ENCODE measurements at regions of chr22 and their contacts with region 1.

Region 1: GRCh38 chr22:31970490-31971444 is 26.4 kb downstream of the YWHAH start:
- DNase-seq: peak; percentile 75 to 93 (median 83)
- H3K4me3 ChIP-seq: peak overlapping the region; percentile 41 to 78 (median 60)
- H3K27ac ChIP-seq: peak overlapping the region in 45 of 59 donors; percentile 2 to 85 (median 55)
- H3K27me3 ChIP-seq: no peaks in the 10 kb centered on the region
- CTCF ChIP-seq: peak; percentile 71 to 98 (median 90)

Region 2: DNA sequence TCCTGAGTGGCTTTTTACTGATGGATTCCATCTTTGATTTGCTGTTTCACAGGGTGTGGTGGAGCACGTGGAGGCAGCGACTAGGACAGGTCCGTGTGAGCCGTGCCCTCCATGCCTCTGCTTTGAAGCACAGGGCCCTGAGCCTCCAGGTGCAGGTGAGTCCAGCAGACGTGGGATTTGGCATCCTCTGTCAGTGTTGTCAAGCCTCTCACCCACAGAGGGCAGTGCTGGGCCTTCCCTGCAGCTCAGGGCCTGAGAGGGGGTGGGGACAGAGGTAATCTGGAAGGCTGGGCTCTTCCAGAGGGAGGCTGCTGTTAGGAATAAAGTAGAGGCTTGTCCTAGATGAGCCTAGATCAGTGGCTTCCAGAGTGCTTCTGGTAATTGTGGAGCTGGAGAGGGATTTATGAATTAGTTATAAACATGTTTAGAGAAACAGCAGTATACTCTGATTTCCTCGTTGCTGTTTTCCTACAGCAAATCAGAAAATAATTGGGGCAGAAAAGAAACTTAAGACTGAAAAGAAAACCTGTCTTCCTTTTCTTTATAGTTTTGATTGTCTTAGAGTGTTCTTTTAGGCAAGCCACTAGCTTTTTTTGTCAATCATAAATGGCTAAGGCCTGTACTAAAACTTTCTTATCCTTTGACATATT is 409.4 kb before region 1 on chr22:
- intact Hi-C with region 1: loop called in 1 of 2 experiments (anchors 5 kb)
- DNase-seq: peak; percentile 47 to 92 (median 74)
- H3K4me3 ChIP-seq: no peak overlapping the region
- H3K27ac ChIP-seq: peak overlapping the region in 34 of 59 donors; percentile 0 to 70 (median 39)
- H3K27me3 ChIP-seq: no peaks in the 10 kb centered on the region
- CTCF ChIP-seq: peak; percentile 27 to 87 (median 75)

Region 3: DNA sequence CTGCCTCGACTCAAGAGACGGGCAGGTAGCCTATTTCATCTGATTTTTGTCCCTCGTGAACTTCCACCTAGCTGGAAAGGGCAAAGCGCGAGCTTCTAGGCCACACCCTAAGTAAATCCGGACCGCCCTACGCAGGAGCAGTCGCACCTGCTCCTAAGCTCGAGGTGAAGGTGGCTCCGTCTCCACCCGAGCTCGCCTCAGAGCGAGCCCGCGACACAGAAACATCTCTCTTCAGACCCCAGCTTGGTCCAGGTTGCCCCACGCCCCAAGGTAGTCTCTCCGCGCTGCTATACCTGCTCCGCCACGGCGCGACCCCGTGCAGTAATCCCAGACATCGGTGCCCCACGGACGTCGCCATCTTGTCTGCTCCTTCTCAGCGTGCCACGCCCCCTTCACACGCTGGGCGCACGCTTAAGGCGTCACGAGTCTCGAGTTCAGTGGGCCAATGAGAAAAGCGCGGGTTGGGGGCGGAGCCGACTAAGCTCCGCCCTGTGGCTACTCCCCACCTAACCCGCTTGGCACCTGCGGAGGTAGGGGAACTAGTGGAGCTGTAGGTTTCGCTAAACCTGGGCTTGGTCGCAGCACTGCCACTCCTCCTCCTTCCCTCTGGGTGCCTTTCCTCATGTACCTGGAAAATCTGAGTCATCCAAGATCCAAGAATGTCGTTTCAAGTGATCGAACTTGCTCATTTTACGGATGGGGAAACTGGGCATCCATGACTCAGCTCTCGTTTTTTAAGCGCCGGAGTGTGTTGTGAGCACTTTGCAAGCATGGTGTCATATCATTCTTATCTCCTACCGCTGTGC is 308.7 kb before region 1 on chr22 and contains the start of gene PISD:
- intact Hi-C with region 1: loop called in 1 of 2 experiments (anchors 5 kb)
- DNase-seq: peak; percentile 88 to 95 (median 94)
- H3K4me3 ChIP-seq: peak within 1 kb of the TSS; percentile 58 to 100 (median 93)
- H3K27ac ChIP-seq: peak within 1 kb of the TSS in 53 of 59 donors; percentile 0 to 92 (median 70)
- H3K27me3 ChIP-seq: no peaks in the 10 kb centered on the region
- CTCF ChIP-seq: peak in 25 of 56 donors; percentile 7 to 47 (median 22)
- total RNA-seq, gene PISD: 48.4 to 108 (median 75.5) TPM

Region 4: GRCh38 chr22:31872209-31872608 is 98.6 kb before region 1 on chr22:
- intact Hi-C with region 1: loop called in 1 of 2 experiments (anchors 5 kb)
- DNase-seq: no peak
- H3K4me3 ChIP-seq: no peak overlapping the region
- H3K27ac ChIP-seq: peak overlapping the region in 35 of 59 donors; percentile 7 to 87 (median 74)
- H3K27me3 ChIP-seq: no peaks in the 10 kb centered on the region
- CTCF ChIP-seq: peak in 3 of 56 donors; percentile 9 to 20 (median 17)

Region 5: DNA sequence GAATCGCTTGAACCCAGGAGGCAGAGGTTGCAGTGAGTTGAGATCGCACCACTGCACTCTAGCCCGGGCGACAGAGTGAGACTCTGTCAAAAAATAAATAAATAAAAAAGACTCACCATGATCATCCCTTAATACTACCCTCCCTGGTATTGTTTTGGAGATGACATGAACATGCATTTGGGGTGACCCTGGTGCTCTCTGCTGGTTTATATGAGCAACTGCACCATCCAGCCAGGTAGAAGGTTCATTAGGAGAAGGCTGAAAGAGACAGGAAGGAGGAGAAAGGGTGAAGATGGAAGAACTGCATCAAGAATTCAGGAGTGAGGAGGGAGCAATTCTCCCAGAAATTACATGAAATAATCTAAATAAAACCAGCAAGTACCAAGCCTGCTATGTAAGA is 110.1 kb after region 1 on chr22:
- intact Hi-C with region 1: loop called in 1 of 2 experiments (anchors 10 kb)
- DNase-seq: peak in 1 of 10 donors; percentile 15
- H3K4me3 ChIP-seq: no peak overlapping the region
- H3K27ac ChIP-seq: no peak overlapping the region
- H3K27me3 ChIP-seq: peaks cover 0 to 3% (median 0%) of the 10 kb centered on the region in 45 donors
- CTCF ChIP-seq: peak in 52 of 56 donors; percentile 10 to 65 (median 48)

Region 6: DNA sequence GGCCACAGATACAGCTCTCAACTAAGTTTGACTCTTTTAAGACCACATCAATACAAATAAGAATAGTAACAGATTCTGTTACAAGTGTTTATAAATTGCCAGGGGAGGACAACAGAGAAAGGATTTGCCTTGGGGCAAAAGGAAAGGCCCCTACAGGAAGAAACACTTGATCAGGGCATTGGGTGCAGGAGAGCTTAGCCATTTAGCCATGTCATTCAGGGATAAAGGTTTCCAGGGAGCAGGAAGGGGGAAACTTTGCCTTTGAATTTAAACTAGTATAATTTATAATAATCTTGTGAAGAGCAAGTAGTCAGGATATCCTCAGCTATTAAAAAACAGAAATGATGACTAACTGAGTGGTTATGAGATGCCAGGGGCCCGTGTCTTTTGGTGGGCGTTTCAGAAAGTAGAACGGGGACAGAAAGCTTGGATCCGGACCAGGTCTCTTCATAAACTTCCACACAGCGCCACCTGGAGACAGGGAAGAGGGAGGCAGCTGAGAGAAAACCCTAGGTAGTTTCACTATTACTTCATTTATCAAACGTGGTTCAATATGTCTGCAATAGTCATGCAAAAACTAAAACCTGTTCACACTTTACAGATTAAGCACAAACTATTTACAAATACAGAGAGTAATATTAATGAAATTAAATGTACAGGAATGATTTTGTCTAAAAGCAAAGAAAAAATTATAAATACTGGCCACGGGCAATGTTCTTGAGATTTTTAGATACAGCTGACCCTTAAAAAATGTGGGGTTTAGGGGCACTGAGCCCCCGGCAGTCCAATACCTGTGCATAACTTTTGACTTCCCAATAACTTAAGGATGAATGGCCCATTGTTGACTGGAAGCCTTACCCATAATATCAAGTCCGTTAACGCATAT is 295.4 kb after region 1 on chr22:
- intact Hi-C with region 1: loop called (anchors 5 to 10 kb)
- DNase-seq: peak; percentile 42 to 75 (median 70)
- H3K4me3 ChIP-seq: peak overlapping the region in 15 of 59 donors; percentile 6 to 42 (median 30)
- H3K27ac ChIP-seq: peak overlapping the region in 4 of 59 donors; percentile 13 to 50 (median 27)
- H3K27me3 ChIP-seq: no peaks in the 10 kb centered on the region
- CTCF ChIP-seq: peak; percentile 68 to 93 (median 85)

Region 7: GRCh38 chr22:32991353-32992121 is 1020.8 kb after region 1 on chr22:
- intact Hi-C with region 1: loop called in 1 of 2 experiments (anchors 10 kb)
- DNase-seq: no peak
- H3K4me3 ChIP-seq: no peak overlapping the region
- H3K27ac ChIP-seq: peak overlapping the region in 12 of 59 donors; percentile 9 to 67 (median 30)
- H3K27me3 ChIP-seq: no peaks in the 10 kb centered on the region
- CTCF ChIP-seq: no peak